ENCODE measurements at regions of chr19 and their contacts with region 1.

Region 1: GRCh38 chr19:42268704-42269477 is at the start of gene CIC:
- DNase-seq: peak; percentile 100
- H3K4me3 ChIP-seq: peak within 1 kb of the TSS; percentile 49 to 65 (median 64)
- H3K27ac ChIP-seq: peak within 1 kb of the TSS; percentile 91
- H3K4me1 ChIP-seq: peaks cover 22% of the 10 kb centered on the region
- H3K27me3 ChIP-seq: no peaks in the 10 kb centered on the region
- CTCF ChIP-seq: no peak
- POLR2A ChIP-seq: no peak
- total RNA-seq, gene CIC: 86.0 and 86.3 TPM in 2 replicates

Region 2: GRCh38 chr19:41849067-41849466 is 419.8 kb before region 1 on chr19:
- CTCF ChIA-PET with region 1: no interaction called
- POLR2A ChIA-PET with region 1: no interaction called
- dilution Hi-C with region 1: no loop called
- intact Hi-C with region 1: no loop called
- DNase-seq: no peak
- H3K4me3 ChIP-seq: no peak overlapping the region
- H3K27ac ChIP-seq: no peak overlapping the region
- H3K4me1 ChIP-seq: no peaks in the 10 kb centered on the region
- H3K27me3 ChIP-seq: peaks cover 21 to 32% of the 10 kb centered on the region in 2 experiments
- CTCF ChIP-seq: no peak
- POLR2A ChIP-seq: no peak

Region 3: GRCh38 chr19:42254989-42255765 is 13.7 kb before region 1 on chr19 and contains the start of gene ERF:
- CTCF ChIA-PET with region 1: interaction called, 7 read pairs
- POLR2A ChIA-PET with region 1: interaction called, 3 read pairs
- dilution Hi-C with region 1: no loop called
- intact Hi-C with region 1: loop called (anchors 1 kb)
- DNase-seq: peak; percentile 93
- H3K4me3 ChIP-seq: peak within 1 kb of the TSS; percentile 83 to 98 (median 94)
- H3K27ac ChIP-seq: peak within 1 kb of the TSS; percentile 79
- H3K4me1 ChIP-seq: peaks cover 30% of the 10 kb centered on the region
- H3K27me3 ChIP-seq: no peaks in the 10 kb centered on the region
- CTCF ChIP-seq: no peak
- POLR2A ChIP-seq: peak; percentile 86
- total RNA-seq, gene ERF: 117 and 130 TPM in 2 replicates

Region 4: DNA sequence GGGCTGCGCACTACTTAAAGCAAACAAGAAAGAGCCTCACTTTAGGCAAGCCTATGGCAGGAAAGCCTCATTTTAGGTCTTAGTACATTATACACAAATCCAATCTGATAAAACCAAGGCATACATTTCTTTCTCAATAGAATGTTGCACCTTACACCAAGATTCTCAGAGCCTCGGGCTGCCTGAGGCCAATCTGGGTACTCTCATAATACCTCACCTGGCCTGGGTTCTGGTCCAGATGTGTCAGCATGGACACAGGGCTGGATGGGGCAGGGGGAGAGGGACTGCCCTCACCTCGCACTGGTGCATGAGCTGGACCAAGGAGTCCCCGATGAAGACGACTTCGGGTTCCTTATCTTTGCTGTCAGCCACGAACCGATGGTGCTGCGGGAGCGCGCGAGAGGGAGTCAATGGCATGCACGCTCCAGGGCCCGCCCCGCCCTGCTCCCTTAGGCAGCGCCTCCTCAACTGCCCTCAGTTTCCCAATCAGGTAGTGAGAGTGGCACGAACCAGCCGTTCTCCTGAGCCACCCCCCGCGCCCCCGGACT is 32.8 kb after region 1 on chr19 and contains the start of gene PRR19:
- CTCF ChIA-PET with region 1: no interaction called
- POLR2A ChIA-PET with region 1: no interaction called
- dilution Hi-C with region 1: no loop called
- intact Hi-C with region 1: loop called (anchors 1 kb)
- DNase-seq: no peak
- H3K4me3 ChIP-seq: peak within 1 kb of the TSS; percentile 44 to 70 (median 54)
- H3K27ac ChIP-seq: no peak within 1 kb of the TSS
- H3K4me1 ChIP-seq: peaks cover 9% of the 10 kb centered on the region
- H3K27me3 ChIP-seq: no peaks in the 10 kb centered on the region
- CTCF ChIP-seq: no peak
- POLR2A ChIP-seq: no peak
- total RNA-seq, gene PRR19: 1.0 and 1.5 TPM in 2 replicates